MCF 10A (cell line): ENCODE measurements at regions of chr14 and their contacts with region 1.

Region 1: GRCh38 chr14:36747411-36748184 is 85.9 kb downstream of the PAX9 start:
- DNase-seq: peak; percentile 43
- H3K4me3 Mint-ChIP-seq: no peak overlapping the region
- H3K27ac Mint-ChIP-seq: no peak overlapping the region
- H3K4me1 Mint-ChIP-seq: no peaks in the 10 kb centered on the region
- H3K27me3 Mint-ChIP-seq: no peaks in the 10 kb centered on the region
- CTCF ChIP-seq: peak; percentile 51

Region 2: GRCh38 chr14:35910191-35910590 is 837.4 kb before region 1 on chr14:
- CTCF ChIA-PET with region 1: no interaction called
- POLR2A ChIA-PET with region 1: no interaction called
- intact Hi-C with region 1: no loop called
- DNase-seq: no peak
- H3K4me3 Mint-ChIP-seq: no peak overlapping the region
- H3K27ac Mint-ChIP-seq: no peak overlapping the region
- H3K4me1 Mint-ChIP-seq: no peaks in the 10 kb centered on the region
- H3K27me3 Mint-ChIP-seq: no peaks in the 10 kb centered on the region
- CTCF ChIP-seq: no peak

Region 3: DNA sequence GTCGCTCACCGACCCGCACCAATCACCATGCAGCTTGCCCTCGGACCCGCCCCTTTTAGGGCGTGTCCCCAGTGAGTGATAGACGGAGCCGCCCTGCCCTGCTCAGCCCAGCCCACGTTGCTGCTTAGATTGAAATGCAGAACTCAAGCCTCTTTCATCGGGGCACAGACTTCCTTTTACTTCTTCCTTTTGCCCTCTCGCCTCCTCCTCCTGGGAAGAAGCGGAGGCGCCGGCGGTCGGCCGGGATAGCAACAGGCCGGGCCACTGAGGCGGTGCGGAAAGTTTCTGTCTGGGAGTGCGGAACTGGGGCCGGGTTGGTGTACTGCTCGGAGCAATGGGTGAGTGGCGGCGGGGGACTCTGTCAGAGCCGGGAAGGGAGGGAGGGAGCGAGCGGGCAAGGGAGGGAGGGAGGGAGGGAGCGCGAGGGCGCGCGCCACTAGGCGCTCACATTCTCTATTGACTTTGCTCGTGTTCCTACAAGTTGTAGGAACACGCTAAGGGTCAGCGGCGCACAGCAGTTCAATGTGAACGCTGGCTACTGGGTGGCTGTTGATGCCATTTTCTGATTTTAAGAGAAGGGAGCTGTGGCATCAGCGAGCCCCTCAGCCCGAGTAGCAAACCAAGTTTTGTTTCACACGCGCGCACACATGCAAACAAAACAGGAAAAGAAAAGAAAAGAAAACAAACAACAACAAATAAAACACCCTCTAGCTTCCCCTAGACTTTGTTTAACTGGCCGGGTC is 85.7 kb before region 1 on chr14 and contains the start of gene PAX9:
- CTCF ChIA-PET with region 1: interaction called, 3 read pairs
- POLR2A ChIA-PET with region 1: interaction called, 3 read pairs
- intact Hi-C with region 1: loop called (anchors 5 kb)
- DNase-seq: peak; percentile 96
- H3K4me3 Mint-ChIP-seq: peak within 1 kb of the TSS; percentile 97
- H3K27ac Mint-ChIP-seq: peak within 1 kb of the TSS; percentile 92
- H3K4me1 Mint-ChIP-seq: peaks cover 27% of the 10 kb centered on the region
- H3K27me3 Mint-ChIP-seq: no peaks in the 10 kb centered on the region
- CTCF ChIP-seq: no peak
- total RNA-seq, gene PAX9: 5.5 and 7.3 TPM in 2 replicates

Region 4: DNA sequence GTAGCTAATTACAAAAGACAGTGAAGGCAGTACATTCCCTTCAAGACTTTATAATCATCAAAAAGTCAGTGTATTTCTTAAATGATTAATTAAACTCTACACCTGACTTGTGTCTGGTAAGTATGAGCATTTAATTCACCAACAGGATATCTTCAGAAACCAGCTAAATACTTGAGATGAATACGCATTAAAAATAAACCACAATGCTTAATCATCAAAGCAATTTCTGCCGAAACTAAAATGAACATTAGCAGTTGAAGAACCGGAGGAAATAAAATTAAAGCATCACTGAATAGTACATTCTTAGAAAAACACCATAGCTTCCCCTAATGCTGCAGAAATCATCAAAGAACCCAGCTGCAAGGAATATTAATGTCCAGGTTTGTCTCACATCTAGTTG is 392.1 kb after region 1 on chr14:
- CTCF ChIA-PET with region 1: no interaction called
- POLR2A ChIA-PET with region 1: no interaction called
- intact Hi-C with region 1: no loop called
- DNase-seq: no peak
- H3K4me3 Mint-ChIP-seq: no peak overlapping the region
- H3K27ac Mint-ChIP-seq: no peak overlapping the region
- H3K4me1 Mint-ChIP-seq: peaks cover 11% of the 10 kb centered on the region
- H3K27me3 Mint-ChIP-seq: no peaks in the 10 kb centered on the region
- CTCF ChIP-seq: no peak